ENCODE measurements at regions of chr11 and their contacts with region 1.

Region 1: DNA sequence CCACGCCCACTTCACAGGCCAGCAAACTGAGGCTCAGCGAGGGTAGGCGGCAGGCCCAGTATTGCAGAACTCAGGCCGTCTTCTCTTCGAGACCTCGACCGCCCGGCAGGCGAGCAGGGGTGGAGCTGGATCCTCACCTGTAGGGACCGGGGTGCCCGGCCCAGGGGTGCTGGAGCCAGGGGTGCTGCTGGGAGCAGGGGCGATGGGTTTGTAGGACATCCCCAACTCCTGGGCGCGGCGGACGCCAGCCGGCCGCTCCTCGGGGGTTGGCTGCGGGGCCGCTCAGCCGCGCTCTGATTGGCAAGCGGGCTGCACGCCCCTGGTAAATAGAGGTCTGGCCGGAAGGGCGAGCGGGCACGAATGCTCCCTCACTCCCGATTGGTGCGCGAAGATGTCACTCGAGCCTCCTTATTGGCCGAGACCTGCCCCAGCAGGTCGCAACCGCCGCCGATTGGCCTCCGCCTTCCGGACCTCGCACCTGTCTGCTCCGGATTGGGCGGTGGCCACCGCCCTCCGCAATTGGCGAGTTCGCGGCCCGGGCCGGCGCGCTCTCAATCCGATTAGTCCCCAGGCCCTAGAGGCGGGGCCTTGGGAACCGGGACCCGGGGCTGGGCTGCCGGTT is at the start of gene CDK2AP2:
- DNase-seq: peak; percentile 99
- H3K4me3 Mint-ChIP-seq: peak within 1 kb of the TSS; percentile 92
- H3K27ac Mint-ChIP-seq: peak within 1 kb of the TSS; percentile 89
- H3K4me1 Mint-ChIP-seq: peaks cover 20% of the 10 kb centered on the region
- H3K27me3 Mint-ChIP-seq: no peaks in the 10 kb centered on the region
- CTCF ChIP-seq: no peak
- total RNA-seq, gene CDK2AP2: 93.7 and 136 TPM in 2 replicates

Region 2: GRCh38 chr11:67401495-67402191 is 106.3 kb before region 1 on chr11 and contains the start of gene PPP1CA:
- CTCF ChIA-PET with region 1: interaction called, 8 read pairs
- POLR2A ChIA-PET with region 1: interaction called, 9 read pairs
- intact Hi-C with region 1: loop called (anchors 1 kb)
- DNase-seq: peak; percentile 84
- H3K4me3 Mint-ChIP-seq: peak within 1 kb of the TSS; percentile 71
- H3K27ac Mint-ChIP-seq: no peak within 1 kb of the TSS
- H3K4me1 Mint-ChIP-seq: peaks cover 9% of the 10 kb centered on the region
- H3K27me3 Mint-ChIP-seq: no peaks in the 10 kb centered on the region
- CTCF ChIP-seq: peak; percentile 35
- total RNA-seq, gene PPP1CA: 123 and 143 TPM in 2 replicates

Region 3: DNA sequence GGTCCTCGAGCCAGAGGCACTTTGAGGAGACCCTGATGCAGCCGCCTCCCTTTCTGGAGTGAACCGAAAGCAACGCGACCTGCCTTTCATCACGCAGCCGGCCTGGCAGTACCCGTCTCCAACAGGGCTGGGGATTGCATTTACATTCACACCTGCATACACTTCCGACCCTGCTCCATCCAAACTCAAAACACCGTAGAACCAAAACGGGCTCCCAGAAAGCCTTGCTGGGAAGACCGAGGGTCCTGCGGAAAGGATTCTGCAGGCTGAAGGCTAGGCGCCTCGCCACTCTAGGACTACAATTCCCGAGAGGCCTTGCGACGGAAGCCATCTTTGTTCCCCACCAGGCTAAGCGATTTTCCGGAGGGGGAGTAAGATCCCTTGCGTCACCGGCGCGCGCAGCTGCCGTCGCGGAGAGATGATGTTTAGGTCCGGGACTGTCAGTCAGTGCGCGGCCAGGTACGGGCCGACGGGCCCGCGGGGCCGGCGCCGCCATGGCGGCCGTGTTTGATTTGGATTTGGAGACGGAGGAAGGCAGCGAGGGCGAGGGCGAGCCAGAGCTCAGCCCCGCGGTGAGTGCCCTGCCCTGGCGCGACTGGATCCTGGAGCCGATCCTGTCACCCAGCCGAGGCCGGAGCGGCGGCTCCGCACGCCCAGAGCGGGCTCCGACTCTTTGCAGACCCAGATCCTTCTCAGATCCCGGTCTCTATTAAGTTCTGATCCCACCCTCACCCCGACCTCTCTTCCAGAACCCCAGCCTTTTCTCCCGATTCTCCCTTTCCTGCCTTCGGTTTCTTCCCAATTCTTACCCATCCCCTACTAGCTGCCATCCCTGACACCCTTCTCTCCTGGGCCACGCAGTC is 79.7 kb before region 1 on chr11 and contains the start of gene RPS6KB2:
- CTCF ChIA-PET with region 1: interaction called, 5 read pairs
- POLR2A ChIA-PET with region 1: interaction called, 3 read pairs
- intact Hi-C with region 1: loop called (anchors 1 kb)
- DNase-seq: peak; percentile 97
- H3K4me3 Mint-ChIP-seq: peak within 1 kb of the TSS; percentile 96
- H3K27ac Mint-ChIP-seq: peak within 1 kb of the TSS; percentile 92
- H3K4me1 Mint-ChIP-seq: peaks cover under 1% of the 10 kb centered on the region
- H3K27me3 Mint-ChIP-seq: no peaks in the 10 kb centered on the region
- CTCF ChIP-seq: no peak
- total RNA-seq, gene RPS6KB2: 49.8 and 60.1 TPM in 2 replicates

Region 4: DNA sequence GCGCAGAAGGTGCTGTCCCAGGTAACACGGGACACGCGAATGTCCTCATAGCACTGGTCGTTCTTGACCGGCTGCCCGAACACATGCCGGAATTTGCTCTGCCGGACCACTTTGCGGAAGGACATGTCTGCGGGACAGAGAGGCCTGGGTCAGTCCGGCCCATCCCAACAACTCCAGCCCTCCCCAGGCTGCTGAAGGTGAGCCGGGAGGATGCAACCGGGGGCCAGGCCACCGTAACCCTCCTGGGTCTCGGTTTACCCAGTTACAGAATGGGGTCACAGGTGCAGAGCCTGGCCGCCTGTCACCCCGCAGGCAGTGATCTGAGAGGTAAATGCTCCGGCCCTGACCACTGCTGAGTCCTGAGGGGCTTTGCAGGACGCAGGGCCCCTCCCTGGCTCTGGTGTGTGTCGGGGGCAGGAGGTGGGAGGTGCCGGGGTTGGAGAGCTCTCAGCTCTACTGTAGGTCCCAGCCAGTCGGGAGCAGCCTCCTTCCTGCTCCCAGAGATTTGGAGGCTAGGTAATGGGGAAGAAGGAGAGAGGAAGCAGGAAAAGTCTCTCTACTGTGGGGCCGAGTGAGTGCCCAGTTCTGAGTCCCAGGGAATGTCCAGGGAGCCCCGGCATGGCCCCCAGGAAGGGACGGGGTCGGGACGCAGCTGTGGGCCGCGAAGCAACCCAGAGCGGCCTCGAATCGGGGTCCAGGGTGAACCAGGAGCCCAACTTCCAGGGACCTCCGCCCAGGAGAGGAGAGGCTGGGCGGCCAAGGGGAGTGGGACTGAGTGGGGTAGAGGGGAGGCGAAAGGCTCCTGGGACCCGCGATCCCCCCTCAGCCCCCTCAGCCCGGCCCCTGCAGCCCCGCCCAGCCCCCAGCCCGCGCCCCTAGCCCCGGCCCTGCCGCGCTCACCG is 65.2 kb before region 1 on chr11:
- CTCF ChIA-PET with region 1: interaction called, 3 read pairs
- POLR2A ChIA-PET with region 1: interaction called, 3 read pairs
- intact Hi-C with region 1: loop called (anchors 2 kb)
- DNase-seq: no peak
- H3K4me3 Mint-ChIP-seq: peak overlapping the region; percentile 82
- H3K27ac Mint-ChIP-seq: peak overlapping the region; percentile 63
- H3K4me1 Mint-ChIP-seq: peaks cover 17% of the 10 kb centered on the region
- H3K27me3 Mint-ChIP-seq: no peaks in the 10 kb centered on the region
- CTCF ChIP-seq: no peak

Region 5: DNA sequence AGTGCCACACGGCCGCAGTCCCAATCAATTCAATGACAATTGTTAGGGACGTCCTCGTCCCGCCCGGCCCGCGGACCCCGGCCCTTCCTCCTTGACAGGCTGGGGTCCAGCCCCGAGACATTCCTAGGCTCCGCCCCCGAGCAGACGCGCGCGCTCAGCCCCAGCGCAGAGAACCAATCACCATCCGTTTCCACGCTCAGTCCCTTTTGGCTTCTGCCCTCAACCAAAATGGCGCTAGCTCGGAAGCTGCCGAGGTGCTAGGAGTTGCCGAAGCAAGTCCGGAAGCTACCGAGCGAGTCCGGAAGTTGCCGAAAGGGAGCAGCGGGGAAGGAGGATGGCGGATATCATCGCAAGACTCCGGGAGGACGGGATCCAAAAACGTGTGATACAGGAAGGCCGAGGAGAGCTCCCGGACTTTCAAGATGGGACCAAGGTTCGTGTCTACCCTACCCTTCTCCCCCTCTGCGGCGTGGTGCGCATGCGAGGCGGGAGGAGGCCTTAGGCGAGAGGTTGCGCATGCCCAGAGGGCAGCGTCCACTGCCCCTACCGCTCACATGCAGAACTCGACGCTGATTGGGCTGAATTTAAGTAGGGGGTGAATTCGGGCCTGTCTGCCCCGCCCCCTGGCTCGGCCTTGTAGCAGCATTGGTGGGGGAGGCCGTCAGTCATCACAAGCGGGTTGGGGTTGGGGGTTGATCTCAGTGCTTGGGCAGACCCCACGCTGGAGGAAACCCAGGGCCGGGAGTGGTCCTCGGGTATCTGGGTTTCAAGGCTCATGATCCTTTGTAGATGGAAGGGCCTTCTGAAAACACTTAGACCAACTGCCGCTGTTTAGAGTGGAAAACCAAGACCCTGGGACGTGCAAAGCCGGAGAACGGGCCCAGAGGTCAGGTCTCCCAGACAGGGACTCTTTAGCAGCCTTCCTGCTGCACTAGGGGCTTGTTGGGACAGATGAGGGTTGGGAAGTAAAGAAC is 24.9 kb before region 1 on chr11 and contains the start of gene AIP:
- CTCF ChIA-PET with region 1: interaction called, 5 read pairs
- POLR2A ChIA-PET with region 1: interaction called, 11 read pairs
- intact Hi-C with region 1: loop called (anchors 1 kb)
- DNase-seq: peak; percentile 98
- H3K4me3 Mint-ChIP-seq: peak within 1 kb of the TSS; percentile 90
- H3K27ac Mint-ChIP-seq: peak within 1 kb of the TSS; percentile 99
- H3K4me1 Mint-ChIP-seq: peaks cover 36% of the 10 kb centered on the region
- H3K27me3 Mint-ChIP-seq: no peaks in the 10 kb centered on the region
- CTCF ChIP-seq: peak; percentile 15
- total RNA-seq, gene AIP: 28.7 and 30.5 TPM in 2 replicates

Region 6: DNA sequence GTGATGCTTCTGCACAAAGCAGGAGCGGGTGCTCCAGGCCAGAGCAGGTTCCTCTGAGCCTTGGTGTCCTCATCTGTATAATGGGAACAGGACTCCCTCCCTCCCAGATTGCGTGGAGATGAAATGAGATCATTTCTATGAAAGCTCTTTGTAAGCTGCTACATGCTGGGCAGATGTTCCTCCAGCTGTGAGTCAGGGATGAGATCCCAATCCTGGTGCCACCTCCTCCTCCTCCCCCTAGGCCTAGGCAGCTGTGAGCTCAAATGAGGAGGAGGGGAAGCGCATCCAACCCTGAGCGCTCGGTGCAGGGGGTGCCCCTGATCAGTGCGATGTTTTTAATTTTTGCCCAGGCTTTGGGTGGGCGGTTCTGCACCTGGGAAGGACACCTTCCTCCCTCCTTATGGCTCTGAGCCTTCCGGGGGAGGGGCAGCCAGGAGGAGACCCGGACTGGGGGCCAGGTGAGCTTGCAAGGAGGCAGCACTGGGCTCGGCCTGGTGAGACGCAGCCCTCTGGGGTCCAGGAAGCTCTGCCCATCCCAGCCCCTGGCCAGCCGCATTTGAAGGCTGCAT is 22.4 kb after region 1 on chr11:
- CTCF ChIA-PET with region 1: no interaction called
- POLR2A ChIA-PET with region 1: no interaction called
- intact Hi-C with region 1: no loop called
- DNase-seq: no peak
- H3K4me3 Mint-ChIP-seq: no peak overlapping the region
- H3K27ac Mint-ChIP-seq: no peak overlapping the region
- H3K4me1 Mint-ChIP-seq: peaks cover 6% of the 10 kb centered on the region
- H3K27me3 Mint-ChIP-seq: no peaks in the 10 kb centered on the region
- CTCF ChIP-seq: no peak

Region 7: GRCh38 chr11:67665541-67666362 is 157.8 kb after region 1 on chr11:
- CTCF ChIA-PET with region 1: no interaction called
- POLR2A ChIA-PET with region 1: no interaction called
- intact Hi-C with region 1: no loop called
- DNase-seq: peak; percentile 27
- H3K4me3 Mint-ChIP-seq: no peak overlapping the region
- H3K27ac Mint-ChIP-seq: no peak overlapping the region
- H3K4me1 Mint-ChIP-seq: no peaks in the 10 kb centered on the region
- H3K27me3 Mint-ChIP-seq: no peaks in the 10 kb centered on the region
- CTCF ChIP-seq: peak; percentile 22

Measured in MCF 10A (cell line).